ENCODE measurements at regions of chr19 and their contacts with region 1.

Region 1: DNA sequence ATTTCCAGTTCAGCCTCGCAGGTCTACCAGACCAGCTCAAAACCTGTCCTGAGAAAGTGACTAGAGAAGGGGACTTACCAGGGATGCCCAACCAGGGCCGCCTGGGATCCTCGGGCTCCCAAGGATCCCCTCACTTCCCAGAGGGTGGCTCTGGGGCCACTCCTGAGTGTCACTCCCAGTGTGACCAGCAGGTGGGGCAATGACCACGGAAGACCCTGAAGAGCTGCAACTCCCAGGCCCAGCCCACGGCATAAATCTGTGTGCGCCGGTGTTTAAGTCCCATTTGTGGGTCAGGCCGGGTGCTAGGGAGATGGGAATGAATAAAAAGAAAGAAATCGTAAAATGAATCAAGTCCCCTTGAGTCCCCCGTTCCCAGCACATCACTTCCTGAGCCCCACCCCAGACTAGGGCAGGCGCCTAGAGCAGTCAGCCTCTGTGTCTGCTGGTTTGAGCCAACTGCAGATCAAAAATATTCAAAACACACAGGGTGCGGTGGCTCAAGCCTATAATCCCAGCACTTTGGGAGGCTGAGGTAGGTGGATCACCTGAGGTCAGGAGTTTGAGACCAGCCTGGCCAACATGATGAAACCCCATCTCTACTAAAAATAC is 10.7 kb downstream of the PTGIR start:
- DNase-seq: peak; percentile 86 to 95 (median 94)
- ATAC-seq: peak; percentile 76 to 82
- H3K4me3 ChIP-seq: no peak overlapping the region
- H3K27ac ChIP-seq: no peak overlapping the region
- H3K4me1 ChIP-seq: peaks cover 2% of the 10 kb centered on the region
- H3K27me3 ChIP-seq: no peaks in the 10 kb centered on the region

Region 2: DNA sequence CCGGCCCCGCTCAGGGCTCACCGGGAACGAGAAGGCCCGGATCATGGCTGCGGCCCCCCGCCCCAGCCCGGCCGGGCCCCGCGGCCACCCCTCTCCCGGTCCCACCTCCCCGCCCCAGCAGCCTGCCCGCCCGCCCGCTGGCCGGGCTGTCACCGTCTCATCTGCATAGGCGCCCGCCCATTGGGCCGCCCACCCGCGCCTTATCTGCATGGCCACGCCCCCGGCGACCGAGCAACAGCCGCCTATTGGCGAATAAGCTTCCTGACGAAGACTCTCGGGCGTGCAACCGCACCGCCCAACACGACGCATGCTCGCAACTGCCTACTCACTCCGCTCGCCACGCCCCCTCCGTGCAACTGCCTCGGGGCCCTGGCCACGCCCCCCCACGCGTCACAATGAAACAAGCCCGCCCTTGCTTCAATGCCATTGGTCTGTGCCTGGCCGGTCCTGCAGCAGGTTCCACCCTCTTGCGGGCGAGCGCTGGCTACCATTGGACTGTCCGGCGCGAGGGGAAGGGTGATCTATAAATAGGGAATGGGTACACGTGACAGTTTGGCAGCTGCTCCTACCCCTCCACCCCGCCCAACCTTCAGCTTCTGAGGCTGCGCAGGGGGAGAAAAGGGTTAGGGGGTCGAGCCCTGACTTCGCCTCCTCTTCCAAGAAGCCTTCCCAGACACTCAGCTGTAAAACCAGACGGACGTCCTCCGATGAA is 47.0 kb after region 1 on chr19 and contains the start of gene DACT3:
- intact Hi-C with region 1: loop called (anchors 2 to 10 kb)
- DNase-seq: peak; percentile 100
- ATAC-seq: peak; percentile 97
- H3K4me3 ChIP-seq: peak within 1 kb of the TSS; percentile 45
- H3K27ac ChIP-seq: peak within 1 kb of the TSS; percentile 28
- H3K4me1 ChIP-seq: no peaks in the 10 kb centered on the region
- H3K27me3 ChIP-seq: no peaks in the 10 kb centered on the region
- total RNA-seq, gene DACT3: 24.6 to 46.5 (median 37.2) TPM

Region 3: GRCh38 chr19:46687438-46688145 is 73.4 kb after region 1 on chr19:
- intact Hi-C with region 1: no loop called
- DNase-seq: no peak
- ATAC-seq: no peak
- H3K4me3 ChIP-seq: no peak overlapping the region
- H3K27ac ChIP-seq: no peak overlapping the region
- H3K4me1 ChIP-seq: no peaks in the 10 kb centered on the region
- H3K27me3 ChIP-seq: no peaks in the 10 kb centered on the region

Region 4: DNA sequence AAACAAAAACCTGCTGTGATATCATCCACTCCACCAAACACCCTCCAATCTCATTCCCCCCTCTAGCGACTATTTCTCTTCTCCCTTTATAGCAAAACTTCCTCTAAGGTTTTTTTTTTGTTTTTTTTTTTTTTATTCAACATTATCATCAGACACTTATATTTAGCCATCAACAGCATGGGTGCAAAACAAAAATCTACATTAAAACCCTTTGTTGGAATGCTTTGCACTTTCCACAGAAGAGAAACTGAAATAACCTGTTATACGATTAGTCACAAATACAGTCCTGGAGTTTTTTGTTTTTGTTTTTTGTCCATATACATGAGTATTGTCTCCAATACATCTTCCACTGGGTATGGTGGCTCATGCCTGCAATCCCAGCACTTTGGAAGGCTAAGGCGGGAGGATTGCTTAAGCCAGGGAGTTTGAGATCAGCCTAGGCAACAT is 211.3 kb after region 1 on chr19:
- intact Hi-C with region 1: no loop called
- DNase-seq: no peak
- ATAC-seq: no peak
- H3K4me3 ChIP-seq: no peak overlapping the region
- H3K27ac ChIP-seq: no peak overlapping the region
- H3K4me1 ChIP-seq: no peaks in the 10 kb centered on the region
- H3K27me3 ChIP-seq: no peaks in the 10 kb centered on the region

Region 5: DNA sequence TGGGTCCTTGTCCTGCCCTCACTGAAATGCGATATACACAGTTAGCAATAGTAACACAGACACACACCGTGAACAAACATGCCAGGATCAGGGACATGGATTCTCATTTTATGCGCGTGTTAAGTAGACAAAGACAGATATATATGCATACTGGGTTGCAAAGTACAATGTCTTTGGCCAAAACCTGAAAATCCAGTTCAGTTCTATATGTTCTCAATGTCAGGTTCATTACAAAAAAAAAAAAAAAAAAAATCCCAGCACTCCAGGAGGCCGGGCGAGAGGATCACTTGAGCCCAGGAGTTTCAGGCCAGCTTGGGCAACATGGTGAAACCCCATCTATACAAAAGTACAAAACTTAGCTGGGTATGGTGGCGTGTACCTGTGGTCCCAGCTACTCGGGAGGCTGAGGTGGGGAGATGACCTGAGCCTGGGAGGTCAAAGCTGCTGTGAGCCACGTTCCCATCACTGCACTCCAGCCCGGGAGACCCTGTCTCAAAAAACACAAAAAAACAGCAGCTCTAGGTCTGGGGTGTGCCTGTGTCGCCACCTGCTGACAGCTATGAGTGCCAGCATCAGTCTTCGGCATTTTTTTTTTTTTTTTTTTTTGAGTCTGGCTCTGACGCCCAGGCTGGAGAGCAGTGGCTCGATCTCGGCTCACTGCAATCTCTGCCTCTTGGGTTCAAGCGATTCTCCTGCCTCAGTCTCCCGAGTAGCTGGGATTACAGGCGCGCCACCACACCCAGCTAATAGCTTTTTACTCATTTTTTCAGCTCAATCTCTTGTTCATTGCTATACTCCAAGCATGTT is 226.1 kb after region 1 on chr19:
- intact Hi-C with region 1: loop called in 1 of 4 experiments (anchors 10 kb)
- DNase-seq: peak; percentile 47 to 84 (median 76)
- ATAC-seq: peak; percentile 52 to 55
- H3K4me3 ChIP-seq: no peak overlapping the region
- H3K27ac ChIP-seq: peak overlapping the region; percentile 13
- H3K4me1 ChIP-seq: peaks cover 2% of the 10 kb centered on the region
- H3K27me3 ChIP-seq: no peaks in the 10 kb centered on the region

Region 6: GRCh38 chr19:46860125-46860845 is 246.1 kb after region 1 on chr19:
- intact Hi-C with region 1: no loop called
- DNase-seq: peak; percentile 99 to 100 (median 99)
- ATAC-seq: peak; percentile 93 to 94
- H3K4me3 ChIP-seq: peak overlapping the region; percentile 100
- H3K27ac ChIP-seq: peak overlapping the region; percentile 86
- H3K4me1 ChIP-seq: peaks cover 12% of the 10 kb centered on the region
- H3K27me3 ChIP-seq: no peaks in the 10 kb centered on the region

Measured in right cardiac atrium (tissue), 5 donors.